ENCODE measurements at regions of chr2 and their contacts with region 1.

Region 1: DNA sequence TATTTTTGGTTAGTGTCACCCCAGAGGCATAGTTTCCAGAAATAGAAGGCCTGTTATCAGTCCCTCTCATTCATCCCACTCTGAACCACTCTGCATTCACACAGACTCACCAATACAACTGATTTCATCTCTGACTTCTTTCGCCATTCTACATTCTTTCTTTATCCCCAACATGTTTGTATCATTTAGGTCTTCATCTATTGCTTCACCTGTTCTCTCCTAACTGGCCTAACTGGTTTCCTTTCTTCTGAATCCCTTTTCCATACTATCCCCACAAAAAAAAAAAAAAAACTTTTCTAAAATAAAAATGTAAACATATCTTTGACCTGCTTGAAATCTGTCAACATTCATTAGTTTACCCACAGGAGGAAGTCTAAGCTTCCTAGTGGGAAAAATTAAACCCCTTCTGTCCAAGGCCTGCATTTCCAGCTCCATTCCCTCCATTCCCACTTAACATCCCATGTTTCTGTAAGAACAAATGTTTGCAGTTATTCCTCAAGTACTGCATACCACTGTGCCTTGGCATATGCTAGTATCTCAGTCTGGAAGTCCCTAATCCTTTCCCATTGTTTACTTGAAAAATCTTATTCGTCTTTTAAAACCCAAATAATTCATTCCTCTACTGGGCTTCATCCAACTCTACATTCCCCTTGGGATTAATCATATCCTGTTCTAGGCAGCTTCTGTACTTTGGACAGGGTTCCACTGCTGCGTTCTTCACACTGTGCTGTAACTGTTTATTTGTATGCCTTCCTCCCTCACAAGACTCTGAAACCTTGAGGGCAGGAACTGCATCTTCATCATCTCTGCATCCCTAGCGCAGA is 68.5 kb downstream of the FIGN start:
- DNase-seq: peak in 1 of 2 experiments; percentile 50
- H3K4me3 ChIP-seq: no peak overlapping the region
- H3K4me3 Mint-ChIP-seq: peak overlapping the region; percentile 4
- H3K27ac Mint-ChIP-seq: peak overlapping the region; percentile 1
- H3K4me1 ChIP-seq: peaks cover 25% of the 10 kb centered on the region
- H3K4me1 Mint-ChIP-seq: peaks cover 25% of the 10 kb centered on the region
- H3K27me3 ChIP-seq: no peaks in the 10 kb centered on the region
- H3K27me3 Mint-ChIP-seq: no peaks in the 10 kb centered on the region
- CTCF ChIP-seq: no peak

Region 2: GRCh38 chr2:163541943-163542342 is 125.3 kb before region 1 on chr2:
- CTCF ChIA-PET with region 1: no interaction called
- POLR2A ChIA-PET with region 1: no interaction called
- intact Hi-C with region 1: no loop called
- DNase-seq: no peak
- H3K4me3 ChIP-seq: no peak overlapping the region
- H3K4me3 Mint-ChIP-seq: no peak overlapping the region
- H3K27ac Mint-ChIP-seq: no peak overlapping the region
- H3K4me1 ChIP-seq: no peaks in the 10 kb centered on the region
- H3K4me1 Mint-ChIP-seq: no peaks in the 10 kb centered on the region
- H3K27me3 ChIP-seq: no peaks in the 10 kb centered on the region
- H3K27me3 Mint-ChIP-seq: peaks cover 3% of the 10 kb centered on the region
- CTCF ChIP-seq: no peak

Region 3: GRCh38 chr2:163703386-163703785 is 36.1 kb after region 1 on chr2:
- CTCF ChIA-PET with region 1: no interaction called
- POLR2A ChIA-PET with region 1: no interaction called
- intact Hi-C with region 1: loop called (anchors 1 kb)
- DNase-seq: peak in 1 of 2 experiments; percentile 30
- H3K4me3 ChIP-seq: no peak overlapping the region
- H3K4me3 Mint-ChIP-seq: no peak overlapping the region
- H3K27ac Mint-ChIP-seq: peak overlapping the region; percentile 22
- H3K4me1 ChIP-seq: peaks cover 24% of the 10 kb centered on the region
- H3K4me1 Mint-ChIP-seq: peaks cover 22% of the 10 kb centered on the region
- H3K27me3 ChIP-seq: no peaks in the 10 kb centered on the region
- H3K27me3 Mint-ChIP-seq: no peaks in the 10 kb centered on the region
- CTCF ChIP-seq: no peak

Region 4: GRCh38 chr2:163878531-163879117 is 211.3 kb after region 1 on chr2:
- CTCF ChIA-PET with region 1: no interaction called
- POLR2A ChIA-PET with region 1: no interaction called
- intact Hi-C with region 1: loop called (anchors 10 kb)
- DNase-seq: peak in 1 of 2 experiments; percentile 15
- H3K4me3 ChIP-seq: no peak overlapping the region
- H3K4me3 Mint-ChIP-seq: no peak overlapping the region
- H3K27ac Mint-ChIP-seq: peak overlapping the region; percentile 11
- H3K4me1 ChIP-seq: peaks cover 21% of the 10 kb centered on the region
- H3K4me1 Mint-ChIP-seq: peaks cover 15% of the 10 kb centered on the region
- H3K27me3 ChIP-seq: no peaks in the 10 kb centered on the region
- H3K27me3 Mint-ChIP-seq: no peaks in the 10 kb centered on the region
- CTCF ChIP-seq: peak; percentile 31 to 49

Measured in Caco-2 (cell line).